ENCODE measurements at regions of chr7 and their contacts with region 1.

Region 1: DNA sequence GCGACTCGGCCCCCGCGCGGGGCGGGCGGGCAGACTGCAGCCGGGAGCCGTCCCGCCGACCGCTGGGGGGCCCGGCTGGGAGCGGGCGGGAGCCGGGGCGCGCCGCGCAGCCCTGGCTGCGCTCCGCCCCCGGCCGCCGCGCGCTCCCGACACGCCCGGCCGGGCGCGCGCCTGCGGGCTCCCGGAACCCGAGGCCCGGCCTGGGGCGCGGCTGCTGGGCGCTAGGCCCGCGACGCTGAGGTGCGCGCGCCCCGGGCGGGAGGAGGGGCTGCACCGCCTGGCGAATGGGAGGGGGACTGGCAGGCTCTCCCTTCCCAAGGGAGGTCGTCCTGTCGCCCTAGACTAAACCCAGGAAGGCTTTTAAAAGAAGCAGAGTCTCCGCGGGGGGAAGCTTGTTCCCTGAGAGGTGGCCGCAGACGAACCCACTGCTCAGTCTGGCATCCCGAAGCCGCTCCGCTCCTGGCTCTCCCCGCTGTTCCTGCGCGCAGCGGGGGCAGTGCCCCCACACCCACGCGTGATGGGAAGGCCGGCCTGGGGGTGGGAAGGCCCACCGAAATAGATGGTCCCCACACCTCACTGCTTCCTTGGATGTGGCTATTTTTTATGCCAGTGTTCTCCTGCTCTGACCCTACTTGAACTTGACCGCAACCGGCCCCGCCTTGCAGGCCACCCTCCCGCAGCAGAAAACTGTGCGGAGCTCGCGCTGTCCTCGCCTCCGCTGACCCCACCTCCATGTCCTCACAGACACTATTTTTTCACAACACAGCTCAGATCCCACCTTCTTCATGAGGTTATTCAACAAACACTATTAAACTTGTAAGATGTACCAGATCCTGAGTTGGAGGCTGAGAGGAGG is at the start of gene VOPP1:
- DNase-seq: no peak
- H3K4me3 ChIP-seq: peak within 1 kb of the TSS; percentile 89
- CTCF ChIP-seq: no peak

Region 2: GRCh38 chr7:55400191-55400590 is 172.4 kb before region 1 on chr7:
- in situ Hi-C with region 1: no loop called
- DNase-seq: no peak
- H3K4me3 ChIP-seq: no peak overlapping the region
- CTCF ChIP-seq: no peak

Region 3: DNA sequence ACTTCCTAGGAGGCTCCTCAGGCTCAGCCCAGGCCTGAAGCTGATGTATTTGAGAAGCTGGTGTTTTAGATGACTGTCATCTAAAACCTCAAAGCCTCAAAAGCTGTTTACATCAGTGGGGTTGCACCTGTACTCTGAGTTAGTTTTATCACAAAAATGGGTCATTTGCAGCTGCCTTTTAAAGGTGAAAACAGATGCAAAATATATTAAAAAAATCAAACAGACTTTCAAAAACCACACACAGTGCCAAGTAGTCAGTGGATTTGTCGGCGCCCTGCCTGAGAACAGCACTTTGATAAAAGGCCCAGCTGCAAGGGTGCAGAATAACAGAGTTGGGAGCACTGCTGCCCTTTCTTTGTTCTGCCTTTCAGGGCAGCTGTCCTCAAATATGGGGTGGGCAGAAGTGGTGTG is 103.3 kb before region 1 on chr7:
- in situ Hi-C with region 1: loop called (anchors 5 kb)
- DNase-seq: no peak
- H3K4me3 ChIP-seq: no peak overlapping the region
- CTCF ChIP-seq: no peak

Region 4: GRCh38 chr7:55622241-55622640 is 49.6 kb after region 1 on chr7:
- in situ Hi-C with region 1: no loop called
- DNase-seq: no peak
- H3K4me3 ChIP-seq: no peak overlapping the region
- CTCF ChIP-seq: no peak

Measured in astrocyte of the cerebellum (primary cell).